Gastrocnemius medialis (tissue), 4 donors: ENCODE measurements at regions of chr17 and their contacts with region 1.

Region 1: DNA sequence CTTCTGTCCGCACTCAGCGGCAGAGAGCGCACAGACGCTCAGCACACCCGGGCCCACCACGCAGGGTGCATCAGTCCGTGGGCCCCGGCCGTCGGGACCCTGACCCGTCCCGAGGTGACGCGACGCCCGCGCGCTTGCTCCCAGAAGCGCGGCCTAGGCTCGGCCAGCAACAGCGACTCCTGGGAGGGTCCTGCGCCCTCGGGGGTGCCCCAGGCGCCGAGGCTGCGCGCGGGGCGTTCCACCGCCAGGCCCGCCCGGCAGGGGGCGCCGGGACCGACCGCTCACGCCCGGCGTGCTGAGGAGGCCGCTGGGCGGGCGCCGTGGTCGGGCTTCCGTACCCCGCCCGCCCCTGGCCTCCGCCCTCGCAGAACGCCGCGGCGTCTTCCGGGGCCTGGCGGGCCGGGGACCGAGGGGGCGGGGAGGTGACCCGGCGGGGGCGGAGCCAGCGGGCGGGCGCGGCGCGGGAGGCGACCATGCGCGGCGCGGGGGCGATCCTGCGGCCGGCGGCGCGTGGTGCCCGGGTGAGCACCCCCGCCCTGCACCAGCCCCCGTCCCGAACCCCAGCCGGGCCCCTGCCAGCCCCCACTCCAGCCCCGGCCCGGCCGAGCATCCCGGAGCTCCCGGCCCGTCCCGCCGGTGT is at the start of gene CISD3:
- DNase-seq: peak; percentile 70 to 79
- ATAC-seq: peak; percentile 81 to 86
- H3K4me3 ChIP-seq: peak within 1 kb of the TSS; percentile 79 to 96 (median 87)
- H3K27ac ChIP-seq: peak within 1 kb of the TSS; percentile 88 to 95 (median 90)
- H3K4me1 ChIP-seq: peaks cover 20 to 22% of the 10 kb centered on the region in 2 donors
- H3K27me3 ChIP-seq: no peaks in the 10 kb centered on the region
- CTCF ChIP-seq: peak in 4 of 5 experiments; percentile 91 to 98 (median 96)
- POLR2A ChIP-seq: peak; percentile 55 to 68
- total RNA-seq, gene CISD3: 10.0 to 25.8 (median 13.3) TPM

Region 2: GRCh38 chr17:38702166-38702899 is 27.7 kb before region 1 on chr17:
- in situ Hi-C with region 1: no loop called
- intact Hi-C with region 1: loop called (anchors 1 kb)
- DNase-seq: peak; percentile 82 to 88
- ATAC-seq: peak; percentile 47 to 50
- H3K4me3 ChIP-seq: peak overlapping the region; percentile 71 to 93 (median 78)
- H3K27ac ChIP-seq: peak overlapping the region; percentile 96 to 100 (median 98)
- H3K4me1 ChIP-seq: peaks cover 20 to 25% of the 10 kb centered on the region in 2 donors
- H3K27me3 ChIP-seq: no peaks in the 10 kb centered on the region
- CTCF ChIP-seq: no peak
- POLR2A ChIP-seq: peak; percentile 96 to 97